Natural killer cell (primary cell): ENCODE measurements at regions of chr11 and their contacts with region 1.

Region 1: GRCh38 chr11:66001942-66002647 is at the starts of genes BANF1 and EIF1AD:
- DNase-seq: peak; percentile 90 to 98
- ATAC-seq: peak; percentile 84 to 92 (median 85)
- H3K4me3 ChIP-seq: peak within 1 kb of the TSS; percentile 54
- H3K4me3 Mint-ChIP-seq: peak within 1 kb of the TSS; percentile 99
- H3K27ac ChIP-seq: peak within 1 kb of the TSS; percentile 77
- H3K27ac Mint-ChIP-seq: peak within 1 kb of the TSS; percentile 99
- H3K4me1 ChIP-seq: peaks cover 24% of the 10 kb centered on the region
- H3K4me1 Mint-ChIP-seq: peaks cover 22 to 41% of the 10 kb centered on the region in 2 donors
- H3K27me3 ChIP-seq: no peaks in the 10 kb centered on the region
- H3K27me3 Mint-ChIP-seq: no peaks in the 10 kb centered on the region
- CTCF ChIP-seq: no peak
- total RNA-seq, gene BANF1: 87.8 to 107 (median 90.4) TPM
- total RNA-seq, gene EIF1AD: 49.9 to 74.2 (median 62.8) TPM

Region 2: GRCh38 chr11:65711785-65712632 is 290.1 kb before region 1 on chr11 and contains the start of gene KAT5:
- intact Hi-C with region 1: loop called (anchors 5 kb)
- DNase-seq: peak; percentile 99
- ATAC-seq: peak; percentile 84 to 90 (median 85)
- H3K4me3 ChIP-seq: peak within 1 kb of the TSS; percentile 95
- H3K4me3 Mint-ChIP-seq: peak within 1 kb of the TSS; percentile 94
- H3K27ac ChIP-seq: peak within 1 kb of the TSS; percentile 99
- H3K27ac Mint-ChIP-seq: peak within 1 kb of the TSS; percentile 95 to 99
- H3K4me1 ChIP-seq: peaks cover 17% of the 10 kb centered on the region
- H3K4me1 Mint-ChIP-seq: peaks cover 0 to 22% of the 10 kb centered on the region in 2 donors
- H3K27me3 ChIP-seq: no peaks in the 10 kb centered on the region
- H3K27me3 Mint-ChIP-seq: no peaks in the 10 kb centered on the region
- CTCF ChIP-seq: peak; percentile 94
- total RNA-seq, gene KAT5: 140 to 155 (median 146) TPM

Region 3: DNA sequence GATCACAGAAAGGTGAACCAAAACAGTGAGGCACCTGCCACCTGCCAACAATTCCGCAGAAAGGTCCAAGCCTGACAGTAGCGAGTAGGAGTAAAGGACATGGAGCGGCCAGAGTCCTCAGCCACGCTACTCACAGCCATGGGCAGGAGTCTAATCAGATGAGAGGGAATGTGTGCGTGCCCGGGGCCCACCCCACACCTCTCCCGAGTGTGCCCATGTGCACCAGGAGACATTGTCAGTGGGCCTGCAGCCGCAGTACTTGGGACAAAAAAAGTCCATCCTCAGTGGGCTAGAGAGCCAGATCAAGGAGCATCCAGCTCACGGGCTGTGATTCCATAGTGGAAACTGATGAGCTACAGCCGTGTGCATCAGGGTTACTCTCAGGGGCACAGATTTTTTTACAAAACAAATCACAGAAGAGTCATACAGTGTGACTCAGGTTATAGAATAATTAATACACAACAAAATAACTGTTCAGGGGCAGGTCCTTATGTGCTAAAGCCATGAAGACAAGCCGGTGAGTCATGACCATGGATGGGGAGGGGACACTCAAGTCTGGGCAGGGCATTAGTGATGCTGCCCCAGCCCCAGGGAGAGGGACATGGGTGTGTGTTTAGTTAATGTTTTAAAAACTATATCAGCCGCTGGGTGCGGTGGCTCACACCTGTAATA is 28.5 kb before region 1 on chr11:
- intact Hi-C with region 1: no loop called
- DNase-seq: no peak
- ATAC-seq: peak in 1 of 3 donors; percentile 28
- H3K4me3 ChIP-seq: no peak overlapping the region
- H3K4me3 Mint-ChIP-seq: no peak overlapping the region
- H3K27ac ChIP-seq: no peak overlapping the region
- H3K27ac Mint-ChIP-seq: no peak overlapping the region
- H3K4me1 ChIP-seq: peaks cover 15% of the 10 kb centered on the region
- H3K4me1 Mint-ChIP-seq: peaks cover 29 to 42% of the 10 kb centered on the region in 2 donors
- H3K27me3 ChIP-seq: no peaks in the 10 kb centered on the region
- H3K27me3 Mint-ChIP-seq: no peaks in the 10 kb centered on the region
- CTCF ChIP-seq: no peak

Region 4: DNA sequence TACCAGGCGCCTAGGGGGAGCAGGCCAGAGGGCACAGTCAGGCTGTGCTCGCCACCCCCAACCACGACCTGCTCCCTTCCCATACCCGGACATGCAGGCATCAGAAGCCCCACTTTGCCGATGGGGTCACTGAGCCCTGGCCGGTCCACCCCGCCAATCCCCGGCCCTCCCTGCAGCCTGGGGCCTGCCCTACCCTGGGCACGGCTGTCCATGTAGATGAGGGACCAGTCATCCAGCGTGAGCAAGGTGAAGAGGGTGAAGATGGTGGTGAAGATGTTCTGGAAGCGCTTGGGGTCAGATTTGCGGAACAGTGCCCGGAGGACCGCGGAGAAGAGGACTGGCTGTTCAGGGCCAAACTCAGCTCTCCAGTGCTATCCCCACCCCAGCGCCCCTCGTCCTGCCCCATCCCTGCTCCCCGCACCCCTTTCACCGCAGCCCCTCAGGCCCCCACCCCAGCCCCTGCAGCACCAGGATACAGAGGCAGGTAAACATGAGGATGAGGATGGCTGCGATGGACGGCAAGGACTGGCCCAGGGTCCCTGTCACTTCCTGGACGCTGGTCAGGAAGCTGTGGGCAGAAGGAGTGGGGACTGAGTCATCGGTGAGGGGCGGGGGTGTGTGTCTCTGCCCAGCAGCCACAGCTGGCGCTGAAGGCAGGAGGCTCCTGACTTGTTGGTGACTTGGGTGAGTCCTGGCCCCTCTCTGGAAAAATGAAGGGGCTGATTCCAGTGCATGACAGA is 18.7 kb after region 1 on chr11:
- intact Hi-C with region 1: loop called (anchors 2 kb)
- DNase-seq: peak; percentile 32 to 66
- ATAC-seq: peak; percentile 82 to 89 (median 87)
- H3K4me3 ChIP-seq: peak overlapping the region; percentile 21
- H3K4me3 Mint-ChIP-seq: peak overlapping the region; percentile 82
- H3K27ac ChIP-seq: peak overlapping the region; percentile 61
- H3K27ac Mint-ChIP-seq: peak overlapping the region; percentile 57 to 91
- H3K4me1 ChIP-seq: peaks cover 31% of the 10 kb centered on the region
- H3K4me1 Mint-ChIP-seq: peaks cover 30 to 32% of the 10 kb centered on the region in 2 donors
- H3K27me3 ChIP-seq: no peaks in the 10 kb centered on the region
- H3K27me3 Mint-ChIP-seq: peaks cover 4 to 5% of the 10 kb centered on the region in 2 donors
- CTCF ChIP-seq: no peak